GM12878 (cell line): ENCODE measurements at regions of chr16 and their contacts with region 1.

Region 1: GRCh38 chr16:10964039-10964890 is 19.9 kb downstream of the CLEC16A start:
- DNase-seq: no peak
- ATAC-seq: peak; percentile 62
- H3K4me3 ChIP-seq: peak overlapping the region; percentile 18; the same call in 1 of the 2 replicates
- H3K27ac ChIP-seq: peak overlapping the region; percentile 99
- H3K4me1 ChIP-seq: peaks cover 35% of the 10 kb centered on the region
- H3K27me3 ChIP-seq: no peaks in the 10 kb centered on the region
- CTCF ChIP-seq: peak; percentile 94 to 98 (median 98); a peak in 5 of 6 replicates
- EP300 ChIP-seq: peak; percentile 35 to 38; a peak in 2 of 4 replicates
- POLR2A ChIP-seq: peak; percentile 34; the same call in 1 of the 2 replicates
- RAD21 ChIP-seq: peak; percentile 87

Region 2: GRCh38 chr16:10949370-10949970 is 14.8 kb before region 1 on chr16:
- CTCF ChIA-PET with region 1: interaction called, 107 read pairs
- POLR2A ChIA-PET with region 1: interaction called, 38 read pairs
- RAD21 ChIA-PET with region 1: interaction called, 61 read pairs
- SMC1A ChIA-PET with region 1: interaction called, 83 read pairs
- in situ Hi-C with region 1: no loop called
- intact Hi-C with region 1: no loop called
- DNase-seq: peak; percentile 91
- ATAC-seq: peak; percentile 83
- H3K4me3 ChIP-seq: peak overlapping the region; percentile 28; the same call in 1 of the 2 replicates
- H3K27ac ChIP-seq: peak overlapping the region; percentile 62
- H3K4me1 ChIP-seq: peaks cover 27% of the 10 kb centered on the region
- H3K27me3 ChIP-seq: no peaks in the 10 kb centered on the region
- CTCF ChIP-seq: peak; percentile 34 to 55 (median 49); a peak in 2 of 6 replicates
- EP300 ChIP-seq: peak; percentile 9 to 33; a peak in 1 of 4 replicates
- POLR2A ChIP-seq: no peak
- RAD21 ChIP-seq: no peak

Region 3: GRCh38 chr16:11105038-11105903 is 141.0 kb after region 1 on chr16:
- CTCF ChIA-PET with region 1: interaction called, 8 read pairs
- POLR2A ChIA-PET with region 1: interaction called, 3 read pairs
- RAD21 ChIA-PET with region 1: interaction called, 6 read pairs
- SMC1A ChIA-PET with region 1: interaction called, 8 read pairs
- in situ Hi-C with region 1: no loop called
- intact Hi-C with region 1: loop called (anchors 2 kb)
- DNase-seq: peak; percentile 86
- ATAC-seq: peak; percentile 85
- H3K4me3 ChIP-seq: 0 out of 2 replicates have a peak overlapping the region, but pooled peaks have one; percentile 31
- H3K27ac ChIP-seq: peak overlapping the region; percentile 87
- H3K4me1 ChIP-seq: peaks cover 38% of the 10 kb centered on the region
- H3K27me3 ChIP-seq: no peaks in the 10 kb centered on the region
- CTCF ChIP-seq: no peak
- EP300 ChIP-seq: peak in 1 of 2 experiments; percentile 46; a peak in 1 of 4 replicates
- POLR2A ChIP-seq: peak; percentile 69
- RAD21 ChIP-seq: no peak

Region 4: GRCh38 chr16:11255737-11256660 is 291.7 kb after region 1 on chr16 and contains the start of gene SOCS1:
- CTCF ChIA-PET with region 1: interaction called, 78 read pairs
- POLR2A ChIA-PET with region 1: interaction called, 47 read pairs
- RAD21 ChIA-PET with region 1: interaction called, 91 read pairs
- SMC1A ChIA-PET with region 1: interaction called, 54 read pairs
- in situ Hi-C with region 1: loop called (anchors 5 kb)
- intact Hi-C with region 1: loop called (anchors 1 kb)
- DNase-seq: no peak
- ATAC-seq: peak; percentile 60
- H3K4me3 ChIP-seq: peak within 1 kb of the TSS; percentile 91
- H3K27ac ChIP-seq: peak within 1 kb of the TSS; percentile 91
- H3K4me1 ChIP-seq: peaks cover 43% of the 10 kb centered on the region
- H3K27me3 ChIP-seq: no peaks in the 10 kb centered on the region
- CTCF ChIP-seq: peak; percentile 72 to 79 (median 76); a peak in 5 of 6 replicates
- EP300 ChIP-seq: 0 out of 4 replicates have a peak, but pooled peaks of 1 of the 2 experiments have one; percentile 7
- POLR2A ChIP-seq: peak; percentile 92
- RAD21 ChIP-seq: peak; percentile 68
- polyA plus RNA-seq, gene SOCS1: 0.42 to 1.2 TPM

Region 5: DNA sequence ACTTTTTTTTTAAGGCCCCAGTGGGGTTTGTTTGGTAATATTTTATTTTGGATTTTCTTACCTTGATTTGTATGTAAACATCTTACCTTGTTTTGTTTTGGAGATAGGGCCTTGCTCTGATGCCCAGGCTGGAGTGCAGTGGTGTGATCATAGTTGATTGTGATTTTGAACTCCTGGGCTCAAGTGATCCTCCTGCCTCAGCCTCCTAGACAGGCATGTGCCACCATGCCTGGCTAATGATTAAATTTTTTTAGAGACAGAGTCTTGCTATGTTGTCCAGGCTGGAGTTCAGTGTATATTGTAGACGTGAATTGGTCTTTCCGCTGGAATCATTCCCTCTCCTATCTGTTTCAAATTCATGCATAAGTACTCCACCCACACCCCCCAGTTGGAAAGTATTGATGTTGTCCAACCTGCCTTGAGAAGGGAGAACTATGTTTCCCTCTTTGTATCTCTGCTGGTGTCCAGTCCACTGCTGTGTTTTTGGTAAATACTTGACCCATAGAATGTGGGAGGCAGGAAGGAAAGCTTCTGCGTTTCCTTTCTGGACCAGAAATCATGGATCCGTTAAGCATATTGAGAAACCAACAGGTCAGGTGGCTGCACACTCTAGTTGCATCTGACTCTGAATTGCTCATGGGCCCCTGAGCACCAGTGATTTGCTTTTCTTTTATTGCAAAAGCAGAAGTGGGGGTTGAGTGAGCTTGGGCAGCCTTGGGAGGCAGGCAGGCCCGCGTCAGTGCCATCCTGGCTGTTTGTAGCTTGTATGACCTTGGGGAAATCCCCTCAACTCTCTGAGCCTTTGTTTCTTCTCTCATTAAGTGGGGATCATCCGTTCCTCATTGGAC is 406.0 kb after region 1 on chr16:
- CTCF ChIA-PET with region 1: interaction called, 26 read pairs
- POLR2A ChIA-PET with region 1: no interaction called
- RAD21 ChIA-PET with region 1: interaction called, 7 read pairs
- SMC1A ChIA-PET with region 1: interaction called, 3 read pairs
- in situ Hi-C with region 1: no loop called
- intact Hi-C with region 1: no loop called
- DNase-seq: peak; percentile 57
- ATAC-seq: peak; percentile 93
- H3K4me3 ChIP-seq: no peak overlapping the region
- H3K27ac ChIP-seq: no peak overlapping the region
- H3K4me1 ChIP-seq: peaks cover 15% of the 10 kb centered on the region
- H3K27me3 ChIP-seq: no peaks in the 10 kb centered on the region
- CTCF ChIP-seq: no peak
- EP300 ChIP-seq: no peak
- POLR2A ChIP-seq: no peak
- RAD21 ChIP-seq: no peak

Region 6: DNA sequence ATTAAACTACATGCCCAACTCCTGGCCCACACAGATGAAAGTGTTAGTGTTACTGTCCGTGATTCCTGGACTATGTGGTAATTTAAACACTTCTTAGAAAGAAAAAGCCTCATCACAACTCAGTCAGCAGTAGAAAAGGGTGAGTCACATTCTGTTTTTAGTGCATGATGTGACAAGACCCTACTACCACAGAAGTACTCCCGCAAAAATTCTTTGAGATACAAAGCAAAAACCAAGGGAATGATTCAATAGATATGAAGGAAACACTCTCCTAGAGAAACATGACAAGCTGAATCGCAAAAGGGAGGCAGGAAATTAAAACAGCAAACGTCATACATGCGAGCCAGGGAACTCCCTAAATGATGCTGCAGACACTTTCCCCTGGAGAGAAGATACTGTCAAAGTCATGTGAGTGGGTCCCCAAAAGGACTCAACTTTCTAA is 718.4 kb after region 1 on chr16:
- CTCF ChIA-PET with region 1: no interaction called
- POLR2A ChIA-PET with region 1: no interaction called
- RAD21 ChIA-PET with region 1: no interaction called
- SMC1A ChIA-PET with region 1: no interaction called
- in situ Hi-C with region 1: no loop called
- intact Hi-C with region 1: loop called (anchors 1 kb)
- DNase-seq: no peak
- ATAC-seq: peak; percentile 39
- H3K4me3 ChIP-seq: peak overlapping the region; percentile 0; the same call in 1 of the 2 replicates
- H3K27ac ChIP-seq: peak overlapping the region; percentile 67
- H3K4me1 ChIP-seq: peaks cover 83% of the 10 kb centered on the region
- H3K27me3 ChIP-seq: no peaks in the 10 kb centered on the region
- CTCF ChIP-seq: no peak
- EP300 ChIP-seq: no peak
- POLR2A ChIP-seq: no peak
- RAD21 ChIP-seq: no peak